ENCODE measurements at regions of chr5 and their contacts with region 1.

Region 1: DNA sequence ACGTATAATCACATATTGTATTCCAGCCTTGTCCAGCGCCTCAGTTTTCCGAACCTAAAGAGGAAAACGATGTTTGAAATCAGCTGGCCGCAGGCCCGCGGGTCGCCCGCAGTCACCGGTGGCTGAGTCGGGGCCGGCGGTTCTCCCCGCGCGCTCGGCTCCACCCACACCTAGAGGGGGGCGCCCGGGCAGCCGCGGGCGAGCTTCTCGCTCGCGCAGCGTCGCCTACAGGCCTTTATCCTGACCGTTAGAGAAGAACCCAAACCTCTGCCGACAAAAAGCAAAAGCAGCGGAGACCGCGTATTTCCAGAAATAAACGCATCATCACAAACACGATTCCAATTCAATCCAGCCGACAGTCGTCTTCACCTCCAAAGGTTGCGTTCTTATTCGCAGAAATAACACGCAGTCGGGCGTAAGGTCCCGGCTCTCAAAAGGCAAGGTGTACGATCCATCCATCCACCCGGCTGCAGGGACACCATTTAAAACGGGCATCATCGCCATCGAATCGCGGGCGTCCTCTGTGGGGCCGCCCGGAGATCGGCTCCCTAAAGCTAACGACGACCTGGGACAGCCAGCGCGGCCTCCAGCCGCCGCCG is 680 bp upstream of the NIPBL start:
- DNase-seq: peak; percentile 73 to 89 (median 78)
- ATAC-seq: peak; percentile 79 to 89 (median 83)
- H3K4me3 ChIP-seq: peak overlapping the region; percentile 55 to 95 (median 84)
- H3K27ac ChIP-seq: peak overlapping the region; percentile 87 to 97 (median 94)
- H3K4me1 ChIP-seq: peaks cover 4 to 45% (median 33%) of the 10 kb centered on the region in 3 donors
- H3K27me3 ChIP-seq: no peaks in the 10 kb centered on the region
- CTCF ChIP-seq: peak in 1 of 4 donors; percentile 37

Region 2: GRCh38 chr5:36739751-36740221 is 136.1 kb before region 1 on chr5:
- intact Hi-C with region 1: loop called in 1 of 3 experiments (anchors 10 kb)
- DNase-seq: peak; percentile 66 to 90 (median 78)
- ATAC-seq: peak; percentile 49 to 82 (median 72)
- H3K4me3 ChIP-seq: no peak overlapping the region
- H3K27ac ChIP-seq: peak overlapping the region in 3 of 4 donors; percentile 3 to 78 (median 67)
- H3K4me1 ChIP-seq: peaks cover 4 to 31% (median 23%) of the 10 kb centered on the region in 3 donors
- H3K27me3 ChIP-seq: no peaks in the 10 kb centered on the region
- CTCF ChIP-seq: peak; percentile 72 to 92 (median 80)

Region 3: GRCh38 chr5:36744773-36745589 is 130.9 kb before region 1 on chr5:
- intact Hi-C with region 1: loop called in 2 of 3 experiments (anchors 5 to 10 kb)
- DNase-seq: peak; percentile 89 to 96 (median 94)
- ATAC-seq: peak; percentile 79 to 89 (median 84)
- H3K4me3 ChIP-seq: peak overlapping the region; percentile 16 to 52 (median 49)
- H3K27ac ChIP-seq: peak overlapping the region; percentile 69 to 93 (median 83)
- H3K4me1 ChIP-seq: peaks cover 4 to 41% (median 25%) of the 10 kb centered on the region in 3 donors
- H3K27me3 ChIP-seq: no peaks in the 10 kb centered on the region
- CTCF ChIP-seq: peak in 2 of 4 donors; percentile 5 to 54

Region 4: DNA sequence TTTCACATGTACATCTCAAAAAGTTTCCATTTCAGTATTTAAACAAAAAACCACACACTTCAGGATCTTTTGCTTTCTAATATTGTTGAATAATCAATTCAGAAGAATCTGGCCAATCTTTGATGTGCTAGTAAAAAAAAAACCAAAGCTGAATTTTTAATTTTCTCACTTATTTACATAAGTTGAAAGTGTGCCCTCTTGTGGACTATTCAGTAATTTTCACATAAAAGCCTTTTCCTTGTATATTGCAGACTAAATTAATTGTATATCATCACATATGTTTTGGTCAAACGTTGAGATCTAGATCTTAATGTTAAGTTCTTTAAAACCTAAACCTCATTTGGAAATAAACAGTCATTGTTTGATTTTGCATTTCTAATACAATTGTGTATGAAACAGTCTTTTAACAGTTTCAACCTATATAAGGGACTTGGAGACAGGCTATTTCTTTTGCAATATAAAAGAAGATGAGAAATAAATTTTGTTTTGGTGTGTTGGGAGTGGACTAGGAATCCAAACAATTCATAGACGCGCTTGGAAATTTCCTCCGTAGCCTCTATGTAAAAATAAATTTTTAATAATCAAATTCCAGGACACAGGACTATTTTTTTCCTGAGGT is 68.8 kb after region 1 on chr5:
- intact Hi-C with region 1: loop called in 2 of 3 experiments (anchors 5 to 10 kb)
- DNase-seq: no peak
- ATAC-seq: peak in 3 of 4 donors; percentile 51 to 55 (median 54)
- H3K4me3 ChIP-seq: no peak overlapping the region
- H3K27ac ChIP-seq: no peak overlapping the region
- H3K4me1 ChIP-seq: peaks cover 5 to 35% (median 20%) of the 10 kb centered on the region in 3 donors
- H3K27me3 ChIP-seq: no peaks in the 10 kb centered on the region
- CTCF ChIP-seq: peak; percentile 17 to 52 (median 40)

Measured in pancreas (tissue), 10 donors.